Ovary (tissue), 10 donors: ENCODE measurements at regions of chr2 and their contacts with region 1.

Region 1: DNA sequence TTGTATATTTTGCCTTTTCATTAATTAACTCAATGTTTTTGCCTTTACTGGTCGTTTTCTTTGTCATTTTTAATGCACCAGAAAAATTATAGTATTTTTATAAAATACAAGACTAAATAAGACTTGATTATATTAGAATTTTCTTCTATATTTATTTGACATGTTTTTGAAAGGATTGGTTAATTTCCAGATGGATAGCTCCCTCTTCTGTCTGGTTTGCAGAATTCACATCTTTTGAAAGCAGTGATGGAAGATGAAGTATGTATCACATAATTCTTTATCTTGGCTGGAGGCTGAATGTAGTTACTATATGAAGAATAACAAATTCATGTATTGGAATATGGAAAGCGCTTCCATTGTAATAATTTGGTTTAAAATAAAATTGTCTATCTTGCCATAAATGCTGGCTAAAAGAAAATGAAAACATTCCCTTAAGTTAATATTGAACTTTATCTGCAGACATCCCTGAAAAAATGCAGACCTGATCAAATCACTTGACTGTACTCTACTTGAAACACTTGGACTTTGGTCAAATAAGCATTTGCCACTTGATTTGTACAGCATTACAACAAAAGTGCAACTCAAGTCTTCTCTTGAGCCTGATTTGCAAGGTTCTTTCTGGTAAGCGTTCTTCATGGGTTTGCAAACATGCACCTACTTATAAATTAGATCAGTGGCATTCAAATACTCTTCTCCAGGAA is 86.3 kb upstream of the EFEMP1 start:
- DNase-seq: no peak
- H3K4me3 ChIP-seq: no peak overlapping the region
- H3K27ac ChIP-seq: no peak overlapping the region
- H3K4me1 ChIP-seq: peaks cover 6% of the 10 kb centered on the region
- H3K27me3 ChIP-seq: no peaks in the 10 kb centered on the region
- CTCF ChIP-seq: peak; percentile 35 to 58 (median 45)
- EP300 ChIP-seq: no peak
- POLR2A ChIP-seq: no peak

Region 2: GRCh38 chr2:55718165-55719008 is 291.5 kb before region 1 on chr2:
- intact Hi-C with region 1: loop called in 2 of 4 experiments (anchors 2 to 5 kb)
- DNase-seq: peak in 4 of 5 donors; percentile 19 to 60 (median 40)
- H3K4me3 ChIP-seq: no peak overlapping the region
- H3K27ac ChIP-seq: no peak overlapping the region
- H3K4me1 ChIP-seq: no peaks in the 10 kb centered on the region
- H3K27me3 ChIP-seq: no peaks in the 10 kb centered on the region
- CTCF ChIP-seq: peak; percentile 20 to 84 (median 71)
- EP300 ChIP-seq: no peak
- POLR2A ChIP-seq: no peak

Region 3: GRCh38 chr2:55761526-55761925 is 248.4 kb before region 1 on chr2:
- intact Hi-C with region 1: loop called in 1 of 4 experiments (anchors 10 kb)
- DNase-seq: no peak
- H3K4me3 ChIP-seq: no peak overlapping the region
- H3K27ac ChIP-seq: no peak overlapping the region
- H3K4me1 ChIP-seq: no peaks in the 10 kb centered on the region
- H3K27me3 ChIP-seq: no peaks in the 10 kb centered on the region
- CTCF ChIP-seq: no peak
- EP300 ChIP-seq: no peak
- POLR2A ChIP-seq: no peak

Region 4: GRCh38 chr2:56369316-56369715 is 359.4 kb after region 1 on chr2:
- intact Hi-C with region 1: no loop called
- DNase-seq: no peak
- H3K4me3 ChIP-seq: no peak overlapping the region
- H3K27ac ChIP-seq: no peak overlapping the region
- H3K4me1 ChIP-seq: no peaks in the 10 kb centered on the region
- H3K27me3 ChIP-seq: no peaks in the 10 kb centered on the region
- CTCF ChIP-seq: no peak
- EP300 ChIP-seq: no peak
- POLR2A ChIP-seq: no peak